ENCODE measurements at regions of chr3 and their contacts with region 1.

Region 1: GRCh38 chr3:192637803-192638202 is 89.5 kb downstream of the FGF12 start:
- DNase-seq: no peak
- ATAC-seq: peak in 5 of 8 donors; percentile 23 to 58 (median 53)
- H3K4me3 ChIP-seq: no peak overlapping the region
- H3K27ac ChIP-seq: peak overlapping the region; percentile 64 to 88 (median 82)
- H3K4me1 ChIP-seq: peaks cover 0 to 24% (median 6%) of the 10 kb centered on the region in 9 donors
- H3K27me3 ChIP-seq: no peaks in the 10 kb centered on the region
- CTCF ChIP-seq: no peak

Region 2: DNA sequence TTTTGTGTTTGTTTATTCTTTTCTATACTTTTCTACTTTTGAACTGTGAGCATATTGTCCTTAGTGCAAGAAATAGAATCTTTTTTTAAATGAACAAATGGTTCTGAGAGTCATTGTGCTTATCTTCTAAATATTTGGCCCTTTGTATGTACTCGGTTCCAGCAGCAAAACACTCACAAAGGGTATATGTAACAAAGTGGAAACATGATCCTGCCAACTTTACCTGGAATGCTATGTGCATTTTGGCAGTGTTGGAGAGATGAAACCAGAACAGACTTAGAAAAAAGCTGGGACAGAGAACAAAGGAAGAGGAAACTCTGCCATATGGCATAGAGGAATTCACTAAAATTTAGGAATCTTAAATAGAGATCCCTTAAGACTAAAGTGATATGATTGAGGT is 60.5 kb before region 1 on chr3:
- intact Hi-C with region 1: loop called in 1 of 10 experiments (anchors 5 kb)
- DNase-seq: no peak
- ATAC-seq: peak in 6 of 8 donors; percentile 29 to 91 (median 51)
- H3K4me3 ChIP-seq: no peak overlapping the region
- H3K27ac ChIP-seq: peak overlapping the region in 6 of 10 donors; percentile 9 to 51 (median 40)
- H3K4me1 ChIP-seq: peaks cover 0 to 4% (median 0%) of the 10 kb centered on the region in 9 donors
- H3K27me3 ChIP-seq: no peaks in the 10 kb centered on the region
- CTCF ChIP-seq: no peak

Region 3: DNA sequence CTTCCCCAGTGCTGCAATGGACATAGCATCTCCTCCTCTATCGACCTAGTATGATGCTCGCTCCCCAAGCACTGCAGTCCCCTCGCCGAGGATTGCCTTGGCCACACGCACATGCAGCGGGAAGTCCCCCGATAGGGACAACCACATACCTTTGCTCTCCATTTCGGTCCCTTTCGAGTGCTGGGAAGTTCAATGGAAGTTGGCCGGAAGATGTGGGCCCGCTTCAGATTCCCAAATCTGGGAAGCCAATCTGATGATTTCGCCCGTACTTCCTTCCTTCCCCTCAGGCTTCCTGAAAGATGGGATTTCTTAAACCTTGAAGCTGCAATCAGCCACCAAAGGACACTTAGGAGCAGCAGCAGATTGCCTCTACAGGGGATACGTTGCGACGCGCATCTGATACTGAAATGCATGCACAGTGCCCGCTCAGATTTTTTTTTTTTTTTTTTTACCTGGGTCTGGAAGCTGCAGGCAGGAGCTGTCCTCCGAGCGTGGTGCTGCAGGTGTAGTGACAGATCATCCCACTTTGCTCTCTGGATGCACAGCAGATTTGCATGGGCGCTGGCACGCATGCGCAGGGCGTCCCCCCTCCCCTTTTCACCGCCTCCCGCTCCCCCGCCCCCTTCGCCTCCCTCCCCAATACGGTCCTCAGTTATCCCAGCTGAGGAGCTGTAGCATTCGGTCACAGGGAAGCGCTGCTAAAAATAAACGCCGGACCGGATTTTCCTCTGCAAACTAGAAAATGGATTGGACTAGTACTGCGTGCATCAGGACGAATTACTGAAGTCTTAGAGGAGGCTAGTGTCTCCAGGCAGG is 89.4 kb after region 1 on chr3 and contains the start of gene FGF12:
- intact Hi-C with region 1: loop called in 1 of 10 experiments (anchors 5 kb)
- DNase-seq: peak; percentile 86 to 87
- ATAC-seq: peak; percentile 90 to 96 (median 94)
- H3K4me3 ChIP-seq: peak within 1 kb of the TSS; percentile 35 to 64 (median 53)
- H3K27ac ChIP-seq: peak within 1 kb of the TSS; percentile 44 to 82 (median 68)
- H3K4me1 ChIP-seq: peaks cover 0 to 22% (median 4%) of the 10 kb centered on the region in 9 donors
- H3K27me3 ChIP-seq: no peaks in the 10 kb centered on the region
- CTCF ChIP-seq: no peak
- total RNA-seq, gene FGF12: 219 to 504 (median 313) TPM

Region 4: GRCh38 chr3:192772240-192772894 is 134.6 kb after region 1 on chr3:
- intact Hi-C with region 1: loop called in 1 of 10 experiments (anchors 10 kb)
- DNase-seq: peak; percentile 42 to 44
- ATAC-seq: peak in 7 of 8 donors; percentile 67 to 94 (median 84)
- H3K4me3 ChIP-seq: no peak overlapping the region
- H3K27ac ChIP-seq: no peak overlapping the region
- H3K4me1 ChIP-seq: no peaks in the 10 kb centered on the region
- H3K27me3 ChIP-seq: no peaks in the 10 kb centered on the region
- CTCF ChIP-seq: peak; percentile 20 to 69 (median 56)

Measured in heart right ventricle (tissue), 16 donors.